A549 (cell line): ENCODE measurements at regions of chr5 and their contacts with region 1.

Region 1: GRCh38 chr5:160188142-160189015 is 40.9 kb upstream of the FABP6 start:
- DNase-seq: peak; percentile 27 to 31
- ATAC-seq: peak; percentile 55 to 78; a peak in 5 of 6 replicates
- H3K4me3 ChIP-seq: peak overlapping the region; percentile 24; the same call in 1 of the 3 replicates
- H3K27ac ChIP-seq: peak overlapping the region; percentile 71 to 85
- H3K4me1 ChIP-seq: no peaks in the 10 kb centered on the region
- CTCF ChIP-seq: no peak
- EP300 ChIP-seq: no peak
- POLR2A ChIP-seq: no peak
- RAD21 ChIP-seq: no peak

Region 2: DNA sequence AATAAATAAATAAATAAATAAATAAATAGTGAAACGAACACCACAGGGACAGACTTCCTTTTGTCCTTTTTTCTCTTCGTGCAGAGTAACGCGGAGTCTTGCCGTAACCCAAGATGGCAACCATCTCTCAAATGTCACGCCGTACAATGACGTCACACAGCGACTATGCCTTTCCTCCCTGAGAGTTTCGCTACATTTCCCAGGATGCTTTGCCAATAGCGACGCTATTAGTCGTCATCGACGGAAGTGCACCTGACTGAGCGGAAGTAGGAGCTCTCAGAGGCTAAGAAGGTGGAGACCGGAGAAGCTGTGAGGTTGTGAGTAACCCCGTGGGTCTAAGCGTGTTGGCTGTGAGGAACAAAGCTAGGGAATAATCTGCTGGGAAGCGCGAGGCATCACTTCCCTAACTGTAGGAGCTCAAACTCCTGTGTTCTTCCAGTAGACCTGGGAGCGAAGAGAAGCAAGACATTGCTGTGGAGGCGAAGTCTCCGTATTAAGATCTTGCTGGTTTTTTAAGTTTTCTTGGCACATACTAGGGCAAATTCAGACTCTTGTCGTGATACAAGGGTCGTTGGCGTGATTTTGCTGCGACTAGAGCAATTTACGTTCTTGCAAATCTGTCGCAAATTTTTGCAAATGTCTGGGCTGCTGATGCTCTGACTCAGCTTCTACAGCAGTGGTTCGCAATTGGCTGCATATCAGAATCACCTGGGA is 179.3 kb before region 1 on chr5 and contains the start of gene TTC1:
- CTCF ChIA-PET with region 1: no interaction called
- POLR2A ChIA-PET with region 1: no interaction called
- DNase-seq: peak; percentile 94 to 99
- ATAC-seq: peak; percentile 99
- H3K4me3 ChIP-seq: peak within 1 kb of the TSS; percentile 94
- H3K27ac ChIP-seq: peak within 1 kb of the TSS; percentile 85 to 90
- H3K4me1 ChIP-seq: peaks cover 18% of the 10 kb centered on the region
- CTCF ChIP-seq: no peak
- EP300 ChIP-seq: no peak
- POLR2A ChIP-seq: peak; percentile 83
- RAD21 ChIP-seq: no peak
- polyA plus RNA-seq, gene TTC1: 48.6 and 64.9 TPM in 2 replicates

Region 3: GRCh38 chr5:160175438-160176218 is 12.8 kb before region 1 on chr5:
- CTCF ChIA-PET with region 1: interaction called, 12 read pairs
- POLR2A ChIA-PET with region 1: no interaction called
- DNase-seq: no peak
- ATAC-seq: peak; percentile 27 to 43; a peak in 3 of 6 replicates
- H3K4me3 ChIP-seq: no peak overlapping the region
- H3K27ac ChIP-seq: peak overlapping the region in 1 of 2 experiments; percentile 48; a peak in 2 of 6 replicates
- H3K4me1 ChIP-seq: no peaks in the 10 kb centered on the region
- CTCF ChIP-seq: no peak
- EP300 ChIP-seq: no peak
- POLR2A ChIP-seq: no peak
- RAD21 ChIP-seq: no peak